Activated naive CD4-positive, alpha-beta T cell treated with anti-CD3 and anti-CD28 coated beads, Interleukin-2, amount 10 ng/mL, durations not matched to agents 7 days and 5 days (primary cell): ENCODE measurements at regions of chr15 and their contacts with region 1.

Region 1: DNA sequence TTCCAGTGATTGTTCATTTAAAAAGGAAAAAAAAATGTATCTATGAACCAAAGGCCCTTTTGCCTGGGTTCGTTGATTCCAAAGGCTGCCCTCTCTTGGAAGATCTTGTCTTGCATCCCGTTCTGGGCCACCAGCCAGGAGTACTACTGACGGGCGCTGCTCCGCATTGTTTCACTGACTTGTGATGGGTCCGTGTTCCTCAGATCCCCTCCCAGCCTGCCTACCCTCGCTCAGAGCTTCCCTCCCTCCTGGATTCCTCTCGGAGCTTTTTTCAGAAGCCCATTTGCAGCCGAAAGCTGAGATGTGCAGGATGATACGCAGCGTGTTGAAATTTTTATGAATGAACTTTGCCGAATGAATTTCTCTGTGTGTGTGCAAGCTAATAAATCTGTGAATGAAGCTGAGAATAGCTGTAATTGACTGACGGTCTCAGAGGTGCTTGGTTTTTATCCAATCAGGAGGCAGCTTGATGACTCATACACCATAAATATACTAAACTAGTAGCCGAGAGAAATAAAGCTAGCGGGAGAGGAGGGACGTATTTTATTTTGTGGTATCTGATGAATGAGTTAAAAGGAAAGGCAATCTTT is at the start of gene SHC4:
- DNase-seq: no peak
- H3K4me3 Mint-ChIP-seq: peak within 1 kb of the TSS; percentile 62
- H3K27ac Mint-ChIP-seq: peak within 1 kb of the TSS; percentile 73
- H3K4me1 Mint-ChIP-seq: peaks cover 40% of the 10 kb centered on the region
- H3K27me3 Mint-ChIP-seq: peaks cover 58% of the 10 kb centered on the region

Region 2: DNA sequence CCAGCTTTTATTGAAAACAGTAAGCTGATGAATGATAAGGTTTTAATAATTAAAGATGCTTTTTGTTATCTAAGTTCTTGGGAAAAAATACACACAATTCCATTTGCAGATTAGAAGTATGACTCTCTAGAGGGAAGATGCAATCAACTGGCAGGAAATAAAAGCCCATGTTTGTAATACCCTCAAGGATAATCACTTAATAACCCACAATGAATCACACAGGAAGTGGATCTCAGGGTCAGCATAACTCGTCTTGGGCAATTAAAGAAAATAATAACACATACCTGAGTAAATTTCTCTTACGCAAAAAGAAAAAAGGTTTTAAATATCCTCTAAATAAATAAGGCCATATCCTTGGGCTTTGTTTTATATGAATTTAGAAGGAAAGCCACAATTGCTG is 95.1 kb before region 1 on chr15:
- CTCF ChIA-PET with region 1: interaction called, 112 read pairs
- DNase-seq: no peak
- H3K4me3 Mint-ChIP-seq: no peak overlapping the region
- H3K27ac Mint-ChIP-seq: no peak overlapping the region
- H3K4me1 Mint-ChIP-seq: no peaks in the 10 kb centered on the region
- H3K27me3 Mint-ChIP-seq: peaks cover 7% of the 10 kb centered on the region

Region 3: DNA sequence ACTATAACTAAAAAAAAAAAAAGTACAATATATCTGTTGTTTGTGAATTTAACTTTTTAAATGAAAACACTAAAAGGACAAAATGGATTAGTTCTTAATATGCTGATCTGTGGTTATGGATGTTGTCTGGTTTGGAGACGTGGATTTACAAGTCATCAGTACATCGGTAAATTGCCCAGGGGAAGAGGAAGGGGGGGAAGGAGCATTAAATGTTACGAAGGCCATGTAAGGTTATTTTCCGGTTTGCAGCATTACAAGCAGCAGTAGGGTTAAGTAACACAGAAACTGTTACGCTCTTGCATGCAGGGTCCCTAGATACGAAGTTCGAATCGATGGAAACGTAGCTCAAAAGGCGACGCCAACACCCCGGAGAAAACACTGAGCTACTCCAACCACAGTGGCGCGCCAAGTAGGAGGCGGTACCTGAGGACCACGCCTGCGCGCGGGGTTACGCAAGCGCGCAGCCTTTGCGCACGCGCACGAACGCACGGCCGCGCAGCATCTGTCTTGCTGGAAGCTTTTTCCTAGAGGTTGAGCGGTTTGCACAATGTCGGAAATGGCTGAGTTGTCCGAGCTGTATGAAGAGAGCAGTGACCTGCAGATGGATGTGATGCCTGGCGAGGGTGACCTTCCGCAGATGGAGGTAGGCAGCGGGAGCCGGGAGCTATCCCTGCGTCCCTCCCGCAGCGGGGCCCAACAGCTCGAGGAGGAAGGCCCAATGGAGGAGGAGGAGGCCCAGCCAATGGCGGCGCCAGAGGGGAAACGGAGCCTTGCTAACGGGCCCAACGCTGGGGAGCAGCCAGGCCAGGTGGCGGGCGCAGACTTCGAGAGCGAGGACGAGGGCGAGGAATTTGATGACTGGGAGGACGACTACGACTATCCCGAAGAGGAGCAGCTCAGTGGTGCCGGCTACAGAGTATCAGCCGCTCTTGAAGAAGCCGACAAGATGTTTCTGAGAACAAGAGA is 85.7 kb before region 1 on chr15 and contains the start of gene EID1:
- CTCF ChIA-PET with region 1: interaction called, 19 read pairs
- DNase-seq: peak; percentile 94
- H3K4me3 Mint-ChIP-seq: peak within 1 kb of the TSS; percentile 93
- H3K27ac Mint-ChIP-seq: peak within 1 kb of the TSS; percentile 95
- H3K4me1 Mint-ChIP-seq: peaks cover 34% of the 10 kb centered on the region
- H3K27me3 Mint-ChIP-seq: peaks cover 5% of the 10 kb centered on the region

Region 4: GRCh38 chr15:48975472-48976419 is 12.1 kb after region 1 on chr15:
- CTCF ChIA-PET with region 1: interaction called, 59 read pairs
- DNase-seq: peak; percentile 76
- H3K4me3 Mint-ChIP-seq: peak overlapping the region; percentile 52
- H3K27ac Mint-ChIP-seq: no peak overlapping the region
- H3K4me1 Mint-ChIP-seq: peaks cover 8% of the 10 kb centered on the region
- H3K27me3 Mint-ChIP-seq: peaks cover 46% of the 10 kb centered on the region

Region 5: DNA sequence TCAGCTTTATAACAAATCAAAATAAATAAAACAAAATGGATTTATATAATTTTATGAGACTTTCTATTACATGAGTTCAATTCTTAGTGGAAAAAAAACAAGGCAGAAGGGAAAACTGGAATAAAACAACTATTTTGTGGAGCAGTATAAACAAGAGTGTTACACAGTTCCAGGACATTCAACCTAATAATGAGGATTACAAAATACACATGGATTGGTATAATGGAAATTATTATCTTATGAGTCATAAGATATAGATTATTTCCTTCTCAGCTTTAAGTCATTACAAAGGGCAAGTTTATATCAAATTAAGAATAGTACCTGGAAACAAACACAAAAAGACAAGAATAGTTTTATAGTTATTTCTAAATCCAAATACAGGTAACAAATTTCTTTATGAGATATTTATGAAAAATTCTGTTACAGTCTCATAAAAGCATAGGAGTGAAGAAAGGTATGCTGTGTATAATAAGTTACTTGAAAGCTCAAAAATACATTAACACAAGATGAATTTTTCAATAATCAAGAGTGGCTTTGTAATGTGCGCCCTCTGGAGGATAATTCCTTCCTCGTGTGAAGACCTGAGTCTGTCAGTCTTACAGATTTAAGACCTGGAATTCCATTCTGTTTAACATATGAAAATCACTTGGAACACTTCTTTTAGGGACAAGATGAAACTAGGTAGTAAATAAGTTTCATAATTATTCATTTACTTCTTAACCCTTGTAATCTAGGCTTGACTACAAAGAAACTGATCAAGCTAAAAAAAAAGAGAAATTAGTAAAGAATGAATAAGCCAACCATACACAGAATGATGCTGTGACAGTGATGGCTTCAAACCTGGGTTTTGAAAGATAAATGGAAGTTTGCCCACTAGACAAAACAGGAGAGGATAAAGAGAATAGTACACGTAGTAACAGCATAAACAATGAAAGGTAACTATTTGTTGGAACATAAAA is 182.3 kb after region 1 on chr15:
- CTCF ChIA-PET with region 1: interaction called, 20 read pairs
- DNase-seq: peak; percentile 54
- H3K4me3 Mint-ChIP-seq: no peak overlapping the region
- H3K27ac Mint-ChIP-seq: no peak overlapping the region
- H3K4me1 Mint-ChIP-seq: peaks cover 26% of the 10 kb centered on the region
- H3K27me3 Mint-ChIP-seq: no peaks in the 10 kb centered on the region